Dendritic cell treated with granulocyte-macrophage colony-stimulating factor and Interleukin-4, amounts not matched to agents 40 ng/mL and 50 ng/mL, for 4 days (primary cell): ENCODE measurements at regions of chr1 and their contacts with region 1.

Region 1: DNA sequence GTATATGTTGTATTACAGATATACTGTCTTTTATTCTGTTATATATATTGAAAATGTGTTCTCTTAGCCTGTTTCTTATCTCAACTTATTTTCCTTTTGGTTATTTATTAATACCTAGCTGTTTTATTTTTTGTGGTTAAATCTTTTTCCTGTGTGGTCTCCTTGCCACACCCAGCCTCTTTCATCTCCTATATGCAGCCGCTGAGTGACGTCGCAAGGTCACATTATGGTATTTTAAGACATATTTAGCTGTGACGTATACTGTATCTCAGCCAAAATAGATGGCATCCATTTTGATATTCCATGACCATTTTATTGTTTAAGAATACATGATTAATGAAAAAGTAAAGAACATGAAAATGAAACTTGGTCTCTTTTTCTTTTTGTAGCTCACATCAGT is 29.1 kb downstream of the CENPF start:
- H3K4me3 Mint-ChIP-seq: no peak overlapping the region
- H3K27ac Mint-ChIP-seq: no peak overlapping the region
- H3K4me1 Mint-ChIP-seq: no peaks in the 10 kb centered on the region
- H3K27me3 Mint-ChIP-seq: no peaks in the 10 kb centered on the region

Region 2: DNA sequence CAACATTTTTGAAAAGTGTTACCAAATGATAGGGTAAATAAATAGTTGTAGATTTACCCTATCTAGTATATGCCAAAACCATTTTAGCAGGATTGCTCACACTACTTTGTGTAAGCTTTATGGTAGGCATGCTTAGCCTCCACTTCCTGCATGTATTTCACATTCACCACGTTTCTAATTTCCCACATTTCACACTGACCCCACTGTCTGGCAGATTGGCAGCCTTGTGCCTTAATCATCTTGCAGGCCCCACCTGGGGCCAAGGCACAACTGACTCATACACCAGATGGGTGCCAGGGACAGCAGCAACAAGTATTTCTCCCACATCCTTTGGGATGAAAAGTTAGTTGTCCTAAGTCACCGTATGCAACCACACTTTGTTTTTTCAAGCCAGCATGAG is 50.3 kb before region 1 on chr1:
- intact Hi-C with region 1: no loop called
- H3K4me3 Mint-ChIP-seq: no peak overlapping the region
- H3K27ac Mint-ChIP-seq: no peak overlapping the region
- H3K4me1 Mint-ChIP-seq: no peaks in the 10 kb centered on the region
- H3K27me3 Mint-ChIP-seq: no peaks in the 10 kb centered on the region

Region 3: GRCh38 chr1:215146341-215146826 is 514.3 kb after region 1 on chr1:
- intact Hi-C with region 1: loop called (anchors 5 kb)
- H3K4me3 Mint-ChIP-seq: no peak overlapping the region
- H3K27ac Mint-ChIP-seq: no peak overlapping the region
- H3K4me1 Mint-ChIP-seq: no peaks in the 10 kb centered on the region
- H3K27me3 Mint-ChIP-seq: no peaks in the 10 kb centered on the region

Region 4: DNA sequence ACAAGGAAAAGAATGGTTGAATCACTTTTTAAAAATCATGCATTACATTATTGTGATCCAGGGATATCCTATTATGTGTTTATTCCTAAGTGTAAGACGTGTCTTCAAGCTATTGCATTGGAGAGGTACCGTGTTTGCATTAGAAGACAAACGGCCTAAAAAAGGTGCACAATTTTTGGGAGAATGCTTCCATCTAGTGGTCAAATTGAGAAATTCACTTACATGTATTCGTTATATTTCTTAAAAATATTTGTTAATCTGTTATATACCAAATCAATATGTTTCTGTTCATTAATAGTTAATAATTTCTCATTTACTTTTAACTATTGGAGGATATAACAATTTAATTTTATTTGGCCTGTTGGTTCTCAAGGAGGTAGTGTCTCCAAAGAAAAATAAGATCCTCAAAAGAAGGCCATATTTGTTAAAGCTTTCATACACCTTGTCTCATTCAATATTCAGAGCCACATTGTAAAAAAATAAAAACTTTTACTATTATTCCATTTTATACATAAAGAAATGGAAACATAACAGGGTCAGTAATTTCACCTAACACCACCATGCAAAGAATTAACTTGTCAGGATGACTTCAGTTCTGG is 894.6 kb after region 1 on chr1:
- intact Hi-C with region 1: loop called (anchors 5 kb)
- H3K4me3 Mint-ChIP-seq: no peak overlapping the region
- H3K27ac Mint-ChIP-seq: no peak overlapping the region
- H3K4me1 Mint-ChIP-seq: peaks cover 16% of the 10 kb centered on the region
- H3K27me3 Mint-ChIP-seq: peaks cover 3% of the 10 kb centered on the region